ENCODE measurements at regions of chr7 and their contacts with region 1.

Region 1: GRCh38 chr7:151368136-151368571 is 26.5 kb downstream of the NUB1 start:
- DNase-seq: peak; percentile 66 to 90 (median 81)
- ATAC-seq: peak; percentile 99
- H3K4me3 ChIP-seq: no peak overlapping the region
- H3K27ac ChIP-seq: no peak overlapping the region
- H3K4me1 ChIP-seq: peaks cover 6 to 10% of the 10 kb centered on the region in 2 donors
- H3K27me3 ChIP-seq: no peaks in the 10 kb centered on the region
- CTCF ChIP-seq: peak; percentile 94 to 98

Region 2: DNA sequence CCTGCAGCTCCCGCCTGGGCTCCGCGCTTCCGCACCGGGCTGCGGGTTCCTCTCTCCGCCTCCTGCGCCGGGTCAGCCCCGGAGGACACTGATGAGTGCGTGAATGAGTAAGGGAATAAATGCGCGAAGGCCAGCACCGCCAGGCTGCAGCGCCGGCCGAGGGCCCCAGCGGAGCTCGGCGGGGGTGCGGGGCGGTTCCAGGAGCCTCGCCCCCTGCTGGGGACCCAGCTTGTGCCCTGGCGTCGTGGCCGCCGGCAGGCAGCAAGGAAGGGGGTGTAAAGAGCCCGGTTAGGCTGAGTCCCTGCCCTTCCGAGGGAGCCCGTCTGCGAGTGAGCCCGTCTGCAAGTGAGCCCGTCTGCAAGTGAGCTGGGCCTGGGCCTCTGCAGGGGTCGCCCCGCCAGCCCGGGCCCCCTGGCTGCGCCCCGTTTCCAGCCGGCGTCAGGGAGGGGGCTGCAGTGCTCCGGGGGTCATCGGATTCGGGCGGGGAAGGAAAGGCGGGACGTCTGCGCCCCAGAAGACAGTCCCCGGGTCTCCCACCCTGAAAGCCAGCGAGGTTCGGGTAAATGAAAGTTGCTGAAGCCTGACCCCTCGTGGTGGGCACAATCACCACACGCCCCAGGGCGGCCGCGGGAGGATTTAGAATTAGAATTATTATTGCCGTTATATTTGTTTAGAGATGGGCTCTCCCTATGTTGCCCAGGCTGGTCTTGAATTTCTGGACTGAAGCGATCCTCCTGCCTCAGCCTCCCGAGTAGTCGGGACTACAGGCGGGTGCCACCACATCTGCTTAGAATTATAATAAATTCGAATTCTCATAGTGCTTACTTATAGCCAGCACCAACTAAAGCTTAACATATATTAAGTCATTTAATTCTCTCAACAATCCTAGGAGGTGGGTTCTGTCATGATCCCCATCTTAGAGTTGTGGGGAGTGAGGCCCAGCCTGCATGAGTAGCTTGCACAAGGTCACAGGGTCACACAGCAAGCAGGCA is 80.4 kb after region 1 on chr7:
- intact Hi-C with region 1: loop called in 1 of 2 experiments (anchors 2 kb)
- DNase-seq: peak in 3 of 4 donors; percentile 71 to 79 (median 75)
- ATAC-seq: peak; percentile 97
- H3K4me3 ChIP-seq: peak overlapping the region; percentile 50 to 52
- H3K27ac ChIP-seq: no peak overlapping the region
- H3K4me1 ChIP-seq: peaks cover 0 to 9% of the 10 kb centered on the region in 2 donors
- H3K27me3 ChIP-seq: peaks cover 0 to 23% of the 10 kb centered on the region in 2 donors
- CTCF ChIP-seq: peak; percentile 82 to 92

Region 3: DNA sequence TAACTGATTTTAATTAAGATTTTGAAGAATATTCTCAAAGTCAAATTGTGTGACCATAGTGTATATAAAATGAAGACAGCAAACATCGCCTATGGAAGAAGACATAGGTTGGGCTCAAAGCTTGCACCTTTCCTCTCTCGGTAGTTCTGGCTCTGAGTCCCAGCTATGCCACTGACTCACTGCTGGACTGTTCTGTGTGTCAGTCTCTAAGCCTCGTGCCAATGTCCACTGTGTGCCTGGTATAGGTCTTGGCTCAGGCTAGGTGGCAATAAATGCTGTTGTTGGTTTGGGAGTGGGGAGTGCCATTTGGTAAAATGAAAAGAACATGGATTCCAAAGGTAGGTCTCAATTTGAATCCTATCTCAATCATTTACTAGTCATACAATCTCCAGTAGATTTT is 289.0 kb after region 1 on chr7:
- intact Hi-C with region 1: no loop called
- DNase-seq: no peak
- ATAC-seq: no peak
- H3K4me3 ChIP-seq: no peak overlapping the region
- H3K27ac ChIP-seq: no peak overlapping the region
- H3K4me1 ChIP-seq: no peaks in the 10 kb centered on the region
- H3K27me3 ChIP-seq: no peaks in the 10 kb centered on the region
- CTCF ChIP-seq: no peak

Region 4: GRCh38 chr7:151759591-151760042 is 391.5 kb after region 1 on chr7:
- intact Hi-C with region 1: loop called in 1 of 2 experiments (anchors 10 kb)
- DNase-seq: peak in 3 of 4 donors; percentile 50 to 77 (median 53)
- ATAC-seq: peak; percentile 84
- H3K4me3 ChIP-seq: no peak overlapping the region
- H3K27ac ChIP-seq: no peak overlapping the region
- H3K4me1 ChIP-seq: peaks cover 11 to 20% of the 10 kb centered on the region in 2 donors
- H3K27me3 ChIP-seq: no peaks in the 10 kb centered on the region
- CTCF ChIP-seq: peak; percentile 78 to 80

Measured in left lung (tissue), 14 donors.